ENCODE measurements at regions of chr6 and their contacts with region 1.

Region 1: GRCh38 chr6:160455541-160456213 is 107.5 kb downstream of the SLC22A3 start:
- DNase-seq: peak; percentile 47 to 83 (median 60)
- H3K4me3 ChIP-seq: peak overlapping the region in 1 of 4 donors; percentile 43
- H3K27ac ChIP-seq: peak overlapping the region in 2 of 5 donors; percentile 52 to 70
- H3K4me1 ChIP-seq: peaks cover 0 to 10% of the 10 kb centered on the region in 2 donors
- H3K27me3 ChIP-seq: no peaks in the 10 kb centered on the region
- CTCF ChIP-seq: peak; percentile 92 to 99 (median 99)
- POLR2A ChIP-seq: no peak

Region 2: DNA sequence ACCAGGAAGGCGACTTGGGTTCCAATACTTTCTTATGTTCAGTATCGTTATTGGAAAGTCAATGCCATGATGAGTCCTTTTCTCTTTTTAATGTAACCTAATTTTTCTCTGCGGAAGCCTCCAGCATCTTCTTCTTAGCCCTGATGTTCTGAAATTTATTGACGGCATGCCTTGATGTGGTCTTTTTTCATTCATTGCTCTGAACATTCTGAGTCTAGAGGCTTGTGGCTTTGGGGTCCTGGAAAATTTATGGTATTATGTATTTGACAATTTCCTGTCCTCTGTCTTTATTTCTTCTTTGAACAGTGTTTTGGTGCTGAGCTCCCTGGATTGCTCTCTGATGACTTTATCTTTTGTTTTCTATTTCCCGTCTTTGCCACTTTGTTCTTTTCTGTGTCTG is 593.6 kb before region 1 on chr6:
- intact Hi-C with region 1: loop called (anchors 10 kb)
- DNase-seq: no peak
- H3K4me3 ChIP-seq: no peak overlapping the region
- H3K27ac ChIP-seq: no peak overlapping the region
- H3K4me1 ChIP-seq: no peaks in the 10 kb centered on the region
- H3K27me3 ChIP-seq: peaks cover 11% of the 10 kb centered on the region
- CTCF ChIP-seq: no peak
- POLR2A ChIP-seq: no peak

Region 3: DNA sequence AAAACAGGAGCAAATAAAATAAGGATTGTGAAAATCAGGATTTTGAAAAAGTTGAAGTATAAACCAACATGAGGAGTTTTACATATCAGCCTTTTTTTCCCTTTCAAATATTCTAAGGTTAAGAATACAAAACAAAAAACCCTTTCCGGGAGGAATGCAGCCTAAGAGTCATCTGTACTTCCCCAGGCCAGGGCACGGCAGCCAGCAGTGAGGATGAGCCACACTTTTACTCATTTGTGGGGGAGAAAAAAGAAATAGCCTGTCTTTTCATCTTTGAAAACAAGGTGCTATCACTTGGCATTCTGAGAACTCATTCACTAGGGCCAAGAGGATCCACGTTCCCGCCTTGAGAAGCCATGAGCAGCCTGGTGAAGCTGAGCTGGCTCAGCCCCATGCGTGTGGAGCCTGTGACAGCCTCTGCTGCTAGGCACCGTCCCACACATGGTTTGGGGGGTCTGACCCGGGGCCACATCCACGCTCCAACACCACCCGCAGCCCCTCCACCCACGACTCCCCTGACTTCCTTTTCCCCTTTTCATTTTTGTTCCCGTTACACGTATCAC is 322.8 kb before region 1 on chr6:
- intact Hi-C with region 1: loop called (anchors 5 to 10 kb)
- DNase-seq: peak in 1 of 7 donors; percentile 5
- H3K4me3 ChIP-seq: no peak overlapping the region
- H3K27ac ChIP-seq: peak overlapping the region in 1 of 5 donors; percentile 23
- H3K4me1 ChIP-seq: no peaks in the 10 kb centered on the region
- H3K27me3 ChIP-seq: no peaks in the 10 kb centered on the region
- CTCF ChIP-seq: no peak
- POLR2A ChIP-seq: no peak

Region 4: GRCh38 chr6:160221423-160221822 is 234.3 kb before region 1 on chr6:
- intact Hi-C with region 1: loop called in 1 of 2 experiments (anchors 10 kb)
- DNase-seq: no peak
- H3K4me3 ChIP-seq: no peak overlapping the region
- H3K27ac ChIP-seq: no peak overlapping the region
- H3K4me1 ChIP-seq: no peaks in the 10 kb centered on the region
- H3K27me3 ChIP-seq: peaks cover 3% of the 10 kb centered on the region
- CTCF ChIP-seq: peak in 1 of 6 experiments; percentile 15
- POLR2A ChIP-seq: no peak

Region 5: GRCh38 chr6:160534050-160534696 is 78.5 kb after region 1 on chr6:
- intact Hi-C with region 1: loop called (anchors 1 to 2 kb)
- DNase-seq: peak; percentile 31 to 78 (median 48)
- H3K4me3 ChIP-seq: no peak overlapping the region
- H3K27ac ChIP-seq: no peak overlapping the region
- H3K4me1 ChIP-seq: no peaks in the 10 kb centered on the region
- H3K27me3 ChIP-seq: no peaks in the 10 kb centered on the region
- CTCF ChIP-seq: peak; percentile 82 to 97 (median 92)
- POLR2A ChIP-seq: no peak

Measured in adrenal gland (tissue), 19 donors.